Activated CD4-positive, alpha-beta T cell treated with anti-CD3 and anti-CD28 coated beads for 36 hours (primary cell): ENCODE measurements at regions of chr21 and their contacts with region 1.

Region 1: GRCh38 chr21:33360881-33361602 is 36.3 kb downstream of the IFNAR1 start:
- DNase-seq: peak; percentile 94
- ATAC-seq: peak; percentile 88
- H3K4me3 Mint-ChIP-seq: peak overlapping the region; percentile 72
- H3K27ac Mint-ChIP-seq: peak overlapping the region; percentile 75
- H3K4me1 Mint-ChIP-seq: peaks cover 16% of the 10 kb centered on the region
- H3K27me3 Mint-ChIP-seq: no peaks in the 10 kb centered on the region

Region 2: DNA sequence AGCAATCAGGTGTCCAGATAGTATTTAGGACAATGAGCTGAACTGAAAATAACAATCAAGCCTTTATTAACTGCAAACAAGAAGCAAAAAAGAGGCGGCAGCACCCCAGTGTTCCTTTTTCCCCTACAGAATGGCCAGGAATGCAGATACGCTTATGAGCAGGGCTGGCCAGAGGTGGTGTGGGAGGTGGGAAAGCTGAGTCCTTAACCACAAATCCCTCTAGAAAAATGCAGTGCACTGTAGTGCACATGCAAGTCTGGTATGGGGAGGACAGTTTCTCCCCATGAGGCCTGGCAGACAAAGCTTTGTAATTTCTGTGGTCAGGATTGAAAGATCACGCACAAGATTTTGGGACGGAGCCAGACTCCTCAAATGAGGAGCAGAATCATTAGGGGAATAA is 46.9 kb before region 1 on chr21:
- CTCF ChIA-PET with region 1: interaction called, 14 read pairs
- POLR2A ChIA-PET with region 1: no interaction called
- intact Hi-C with region 1: no loop called
- DNase-seq: no peak
- ATAC-seq: no peak
- H3K4me3 Mint-ChIP-seq: no peak overlapping the region
- H3K27ac Mint-ChIP-seq: no peak overlapping the region
- H3K4me1 Mint-ChIP-seq: peaks cover 5% of the 10 kb centered on the region
- H3K27me3 Mint-ChIP-seq: no peaks in the 10 kb centered on the region

Region 3: DNA sequence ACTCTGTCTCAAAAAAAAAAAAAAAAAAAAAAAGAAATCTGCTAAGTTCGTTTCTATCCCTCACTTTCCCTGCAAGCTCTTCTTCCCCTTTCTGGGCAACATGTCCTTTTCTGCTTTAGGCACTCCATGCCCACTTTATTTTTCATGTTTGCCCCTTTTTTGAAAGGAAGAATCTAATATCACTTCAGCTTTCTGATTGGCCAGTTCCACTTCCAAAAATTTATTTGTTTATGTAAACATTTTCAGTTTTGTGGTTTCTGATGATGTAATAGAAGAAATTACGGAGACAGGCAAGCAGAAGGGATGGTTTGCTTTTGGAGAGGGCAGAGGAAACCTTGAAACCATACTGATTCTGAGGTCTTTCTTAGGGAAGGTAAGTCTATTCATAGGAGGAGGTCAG is 21.1 kb before region 1 on chr21:
- CTCF ChIA-PET with region 1: interaction called, 32 read pairs
- POLR2A ChIA-PET with region 1: interaction called, 3 read pairs
- intact Hi-C with region 1: no loop called
- DNase-seq: no peak
- ATAC-seq: no peak
- H3K4me3 Mint-ChIP-seq: no peak overlapping the region
- H3K27ac Mint-ChIP-seq: peak overlapping the region; percentile 19
- H3K4me1 Mint-ChIP-seq: peaks cover 7% of the 10 kb centered on the region
- H3K27me3 Mint-ChIP-seq: no peaks in the 10 kb centered on the region

Region 4: GRCh38 chr21:33380483-33380998 is 19.5 kb after region 1 on chr21:
- CTCF ChIA-PET with region 1: interaction called, 24 read pairs
- POLR2A ChIA-PET with region 1: interaction called, 7 read pairs
- intact Hi-C with region 1: loop called in 1 of 2 experiments (anchors 1 kb)
- DNase-seq: peak; percentile 96
- ATAC-seq: peak; percentile 85
- H3K4me3 Mint-ChIP-seq: peak overlapping the region; percentile 19
- H3K27ac Mint-ChIP-seq: peak overlapping the region; percentile 88
- H3K4me1 Mint-ChIP-seq: peaks cover 62% of the 10 kb centered on the region
- H3K27me3 Mint-ChIP-seq: peaks cover 4% of the 10 kb centered on the region

Region 5: GRCh38 chr21:33441489-33442477 is 80.7 kb after region 1 on chr21:
- CTCF ChIA-PET with region 1: interaction called, 39 read pairs
- POLR2A ChIA-PET with region 1: interaction called, 4 read pairs
- intact Hi-C with region 1: loop called (anchors 1 kb)
- DNase-seq: no peak
- ATAC-seq: no peak
- H3K4me3 Mint-ChIP-seq: no peak overlapping the region
- H3K27ac Mint-ChIP-seq: peak overlapping the region; percentile 12
- H3K4me1 Mint-ChIP-seq: peaks cover 5% of the 10 kb centered on the region
- H3K27me3 Mint-ChIP-seq: no peaks in the 10 kb centered on the region